ENCODE measurements at regions of chr2 and their contacts with region 1.

Region 1: GRCh38 chr2:219057709-219058540 is 2.8 kb downstream of the IHH start:
- DNase-seq: peak; percentile 85
- H3K4me3 Mint-ChIP-seq: peak overlapping the region; percentile 39
- H3K27ac Mint-ChIP-seq: no peak overlapping the region
- H3K4me1 Mint-ChIP-seq: peaks cover 18% of the 10 kb centered on the region
- H3K27me3 Mint-ChIP-seq: peaks cover 55% of the 10 kb centered on the region

Region 2: DNA sequence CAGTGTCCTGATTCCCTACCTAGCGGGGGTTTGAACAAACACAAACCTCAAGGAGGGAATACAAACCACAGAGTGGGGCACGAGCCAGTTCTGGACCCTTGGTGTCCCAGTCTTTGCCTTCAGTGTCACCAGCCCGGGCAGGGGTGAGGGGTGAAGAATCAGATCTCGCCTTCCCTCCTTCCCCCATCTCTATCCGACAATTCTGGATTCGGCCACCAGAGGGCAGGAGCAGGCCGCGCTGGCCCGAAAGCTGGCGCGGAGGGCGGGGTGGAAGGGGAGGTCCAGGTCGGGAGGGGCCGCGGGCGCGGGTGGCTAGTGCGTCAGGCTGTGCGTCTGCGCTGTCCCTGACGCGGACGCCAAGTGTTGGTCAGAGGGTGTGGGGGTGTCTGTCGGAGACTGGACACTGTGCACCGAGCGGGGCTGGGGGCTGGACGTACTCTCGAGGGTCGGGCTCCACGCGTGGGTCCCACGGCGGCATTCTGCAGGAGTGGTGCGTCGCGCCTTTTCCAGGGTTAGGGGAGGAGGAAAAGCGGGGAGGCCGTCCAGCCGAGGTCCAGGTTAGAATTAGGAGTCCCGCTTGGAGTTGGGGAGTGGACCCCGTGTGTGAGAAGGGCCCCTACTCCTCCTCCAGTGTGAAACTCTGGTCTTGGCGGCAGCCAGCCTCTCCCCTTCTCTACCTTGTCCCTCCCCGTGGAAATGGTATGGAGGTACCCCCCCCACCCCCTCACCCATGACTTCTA is 61.8 kb before region 1 on chr2:
- CTCF ChIA-PET with region 1: interaction called, 5 read pairs
- intact Hi-C with region 1: loop called (anchors 5 kb)
- DNase-seq: peak; percentile 84
- H3K4me3 Mint-ChIP-seq: no peak overlapping the region
- H3K27ac Mint-ChIP-seq: no peak overlapping the region
- H3K4me1 Mint-ChIP-seq: peaks cover 14% of the 10 kb centered on the region
- H3K27me3 Mint-ChIP-seq: peaks cover 74% of the 10 kb centered on the region

Region 3: DNA sequence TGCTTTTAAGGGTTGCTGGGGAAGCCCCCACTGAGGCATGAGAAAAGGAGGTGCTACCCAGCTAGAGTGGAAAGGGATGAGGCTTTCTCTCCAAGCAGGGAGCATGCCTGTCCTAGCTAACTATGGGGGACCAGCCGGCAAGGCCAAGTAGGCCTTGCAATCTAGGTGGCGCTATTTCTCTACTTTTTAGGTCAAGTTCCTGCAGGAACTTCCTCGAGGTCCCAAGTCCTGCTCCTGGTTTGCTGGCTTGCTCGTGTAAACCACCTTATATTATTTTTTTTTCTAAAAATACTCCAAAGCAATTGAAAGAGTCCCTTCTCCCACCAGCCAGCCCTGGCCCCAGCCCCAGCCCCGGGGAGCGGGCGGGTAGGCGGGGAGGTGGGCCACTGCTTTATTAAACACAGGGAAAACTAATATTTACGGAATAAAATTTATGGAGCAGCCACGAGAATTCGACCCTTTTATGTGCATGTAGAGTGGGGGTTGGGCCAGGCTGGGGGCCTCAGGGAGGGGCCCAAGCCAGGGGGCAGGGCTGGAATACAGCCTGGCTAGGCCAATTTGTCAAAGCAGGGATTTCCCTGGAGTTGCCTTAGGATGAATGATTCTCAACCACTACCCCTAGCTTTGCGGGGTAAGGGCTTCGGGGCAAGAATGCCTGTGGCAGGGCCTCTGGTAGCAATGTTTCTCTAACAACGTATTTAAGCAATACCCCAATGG is 15.6 kb after region 1 on chr2:
- CTCF ChIA-PET with region 1: interaction called, 63 read pairs
- intact Hi-C with region 1: no loop called
- DNase-seq: peak; percentile 30
- H3K4me3 Mint-ChIP-seq: no peak overlapping the region
- H3K27ac Mint-ChIP-seq: no peak overlapping the region
- H3K4me1 Mint-ChIP-seq: no peaks in the 10 kb centered on the region
- H3K27me3 Mint-ChIP-seq: no peaks in the 10 kb centered on the region

Region 4: DNA sequence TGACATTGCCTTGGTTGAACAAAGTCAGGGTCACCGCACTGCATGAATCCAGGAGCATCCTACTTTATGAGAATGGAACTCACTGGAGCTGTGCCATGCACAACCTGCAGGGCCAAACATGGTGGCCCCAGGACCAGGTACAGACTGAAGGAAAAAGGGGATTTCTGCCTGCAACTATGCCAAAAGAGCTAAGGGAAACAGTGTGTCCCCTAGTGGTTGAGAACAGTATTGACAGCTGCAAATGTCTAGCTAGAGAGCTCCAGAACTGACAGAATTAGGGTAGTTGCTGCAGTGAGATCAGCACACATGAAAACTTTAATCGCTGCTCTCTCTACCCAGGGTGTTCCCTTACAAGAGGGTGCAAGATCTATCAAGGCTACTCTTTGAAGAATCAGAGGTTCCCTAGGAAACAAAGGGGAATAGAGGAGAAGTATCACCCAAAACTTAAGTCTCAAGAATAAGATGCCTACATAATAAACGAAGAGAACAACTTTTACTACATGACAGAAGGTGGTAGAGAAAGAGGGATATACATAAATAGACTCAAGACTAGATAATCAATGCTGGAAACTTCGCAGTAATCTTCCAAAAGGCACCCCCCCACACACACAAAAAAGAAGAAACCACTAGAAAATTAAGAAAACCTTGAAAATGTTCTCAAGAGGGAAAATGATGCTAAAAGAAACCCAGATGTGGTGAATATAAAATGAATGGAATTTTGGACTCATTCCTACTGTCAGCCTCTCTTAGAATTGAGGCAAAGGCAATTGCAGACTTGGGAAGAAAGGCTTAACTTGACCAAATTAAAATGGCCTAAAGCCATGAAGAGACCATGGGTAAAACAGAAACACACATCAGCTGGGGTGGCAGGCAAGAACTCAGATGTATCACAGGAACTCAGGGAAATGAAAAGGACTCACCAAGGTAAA is 46.4 kb after region 1 on chr2:
- CTCF ChIA-PET with region 1: interaction called, 12 read pairs
- intact Hi-C with region 1: loop called (anchors 1 kb)
- DNase-seq: peak; percentile 45
- H3K4me3 Mint-ChIP-seq: no peak overlapping the region
- H3K27ac Mint-ChIP-seq: no peak overlapping the region
- H3K4me1 Mint-ChIP-seq: peaks cover 29% of the 10 kb centered on the region
- H3K27me3 Mint-ChIP-seq: no peaks in the 10 kb centered on the region

Region 5: GRCh38 chr2:219155054-219155644 is 97.2 kb after region 1 on chr2:
- CTCF ChIA-PET with region 1: interaction called, 118 read pairs
- intact Hi-C with region 1: loop called (anchors 1 kb)
- DNase-seq: peak; percentile 40
- H3K4me3 Mint-ChIP-seq: no peak overlapping the region
- H3K27ac Mint-ChIP-seq: no peak overlapping the region
- H3K4me1 Mint-ChIP-seq: peaks cover 7% of the 10 kb centered on the region
- H3K27me3 Mint-ChIP-seq: no peaks in the 10 kb centered on the region